ENCODE measurements at regions of chr4 and their contacts with region 1.

Region 1: GRCh38 chr4:100356181-100356580 is 161.6 kb downstream of the EMCN start:
- DNase-seq: no peak
- H3K4me3 ChIP-seq: no peak overlapping the region
- H3K27ac ChIP-seq: no peak overlapping the region
- H3K4me1 ChIP-seq: no peaks in the 10 kb centered on the region
- H3K27me3 ChIP-seq: no peaks in the 10 kb centered on the region
- CTCF ChIP-seq: no peak
- POLR2A ChIP-seq: no peak

Region 2: DNA sequence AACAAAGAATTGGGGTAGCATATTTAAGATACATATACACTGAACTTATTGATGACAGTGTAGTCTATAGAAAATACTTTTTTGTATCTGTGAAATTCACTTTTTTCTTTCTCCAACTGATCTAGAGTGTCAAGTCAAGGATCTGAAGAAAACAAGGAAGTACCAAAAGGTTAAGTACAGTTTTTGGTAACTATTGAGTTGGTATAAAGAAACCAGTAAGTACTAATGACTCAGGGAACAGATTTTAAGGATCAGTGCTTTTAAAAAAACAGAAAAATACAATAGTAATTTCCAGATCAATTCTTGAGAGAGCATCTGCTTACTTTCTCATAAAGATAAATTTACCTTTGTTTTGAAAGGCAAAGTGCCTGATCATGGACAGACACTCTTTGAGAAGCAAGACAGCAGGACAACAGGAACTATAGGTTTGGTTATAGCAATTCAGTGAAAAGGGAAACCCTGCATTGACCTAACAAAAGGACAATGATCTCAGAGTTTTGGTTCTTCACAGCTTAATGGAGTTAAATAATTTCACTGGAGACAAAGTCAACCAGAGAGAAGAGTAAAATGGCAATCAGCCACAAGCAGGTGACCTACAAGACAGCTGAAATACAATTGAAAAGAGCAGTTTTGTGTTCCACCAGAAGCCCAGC is 815.8 kb before region 1 on chr4:
- intact Hi-C with region 1: loop called (anchors 10 kb)
- DNase-seq: no peak
- H3K4me3 ChIP-seq: no peak overlapping the region
- H3K27ac ChIP-seq: no peak overlapping the region
- H3K4me1 ChIP-seq: no peaks in the 10 kb centered on the region
- H3K27me3 ChIP-seq: no peaks in the 10 kb centered on the region
- CTCF ChIP-seq: no peak
- POLR2A ChIP-seq: no peak

Measured in breast epithelium (tissue), 4 donors.